AG04449 (cell line): ENCODE measurements at regions of chr5 and their contacts with region 1.

Region 1: DNA sequence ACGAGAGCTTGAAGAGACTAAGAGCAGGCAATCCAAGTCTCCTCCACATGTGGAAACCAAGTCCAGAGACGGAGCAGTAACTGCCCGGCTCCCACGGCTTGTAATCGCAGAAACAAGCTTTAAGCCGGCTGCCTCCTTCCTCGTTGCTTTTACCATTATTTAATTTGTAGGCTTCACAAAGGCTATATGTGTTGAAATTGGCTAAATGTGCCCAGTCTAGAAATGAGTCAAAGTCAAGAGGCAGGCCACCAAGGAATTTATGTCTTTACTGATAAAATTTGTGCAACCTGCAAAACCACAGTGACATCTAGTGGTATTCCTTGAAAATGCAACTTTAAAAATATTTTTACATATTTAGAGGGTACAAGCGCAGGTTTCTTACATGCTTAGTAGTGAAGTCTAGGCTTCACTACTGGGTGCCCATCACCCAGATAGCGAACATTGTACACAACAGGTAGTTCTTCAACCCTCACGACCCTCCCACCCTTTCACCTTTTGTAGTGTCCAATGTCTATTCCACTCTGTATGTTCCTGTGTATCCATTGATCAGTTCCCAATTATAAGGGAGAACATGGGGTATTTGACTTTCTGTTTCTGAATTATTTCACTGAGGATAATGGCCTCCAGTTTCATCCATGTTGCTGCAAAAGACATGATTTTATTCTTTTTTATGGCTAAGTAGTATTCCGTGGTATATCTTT is 33.5 kb upstream of the EBF1 start:
- DNase-seq: peak; percentile 40
- H3K4me3 ChIP-seq: no peak overlapping the region
- CTCF ChIP-seq: peak; percentile 50

Region 2: DNA sequence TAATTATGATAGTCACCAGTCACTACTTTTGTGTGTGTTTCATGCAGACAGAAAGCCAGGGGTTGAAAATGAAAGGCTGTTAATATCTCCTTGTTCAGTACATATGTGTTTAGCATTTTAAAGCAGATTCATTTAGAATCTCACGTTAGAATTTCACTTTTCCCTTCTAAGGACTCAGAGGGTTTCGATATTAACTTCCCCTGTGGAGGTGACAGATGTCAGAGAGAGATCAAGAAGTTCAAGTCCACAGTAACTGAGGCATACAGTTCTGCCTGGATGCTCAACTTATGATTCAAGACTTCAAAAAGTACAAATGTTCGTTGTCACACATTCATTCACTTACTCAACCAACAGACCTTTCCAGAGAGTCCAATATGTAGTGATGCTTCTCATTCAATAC is 284.6 kb before region 1 on chr5:
- CTCF ChIA-PET with region 1: no interaction called
- POLR2A ChIA-PET with region 1: no interaction called
- DNase-seq: no peak
- H3K4me3 ChIP-seq: no peak overlapping the region
- CTCF ChIP-seq: no peak

Region 3: GRCh38 chr5:159112436-159112835 is 20.8 kb before region 1 on chr5:
- CTCF ChIA-PET with region 1: interaction called, 23 read pairs
- POLR2A ChIA-PET with region 1: no interaction called
- DNase-seq: no peak
- H3K4me3 ChIP-seq: no peak overlapping the region
- CTCF ChIP-seq: no peak